HepG2 (cell line): ENCODE measurements at regions of chr2 and their contacts with region 1.

Region 1: DNA sequence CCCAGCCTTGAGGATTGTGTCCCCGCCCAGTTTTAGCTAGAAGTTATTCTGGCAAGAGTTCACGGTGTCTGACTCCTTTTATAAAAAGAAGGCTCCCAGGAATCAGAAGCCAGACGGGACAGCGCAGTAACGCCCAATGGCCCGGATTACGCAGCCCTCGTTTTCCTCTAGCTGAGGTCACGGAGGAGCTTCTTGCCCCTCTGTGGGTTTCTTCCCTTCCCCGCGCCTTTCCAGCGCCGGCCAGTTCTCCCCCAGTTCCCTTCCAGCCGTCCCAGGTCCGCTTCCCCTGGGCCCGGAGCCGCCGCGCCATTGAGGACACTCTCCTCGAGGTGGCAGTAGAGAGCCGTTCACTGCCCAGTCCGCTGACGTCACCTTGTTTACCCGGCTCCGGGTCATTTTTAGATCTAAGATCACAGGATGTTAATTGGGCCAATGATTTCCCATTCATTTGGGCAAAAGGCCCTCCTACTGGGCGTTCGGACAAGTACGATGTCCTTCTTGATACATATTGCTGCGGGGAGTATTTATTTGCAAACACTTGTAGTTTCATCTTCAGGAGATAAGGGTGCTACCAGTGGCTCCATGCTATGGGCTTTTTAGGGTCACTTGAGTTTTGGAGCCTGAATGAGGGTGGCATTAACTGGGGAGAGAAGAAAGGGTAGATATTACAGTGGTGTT is 81.5 kb upstream of the PPM1B start:
- DNase-seq: peak; percentile 72
- ATAC-seq: peak; percentile 91
- H3K4me3 ChIP-seq: peak overlapping the region; percentile 55 to 72 (median 61)
- H3K27ac ChIP-seq: no peak overlapping the region
- H3K4me1 ChIP-seq: peaks cover 44% of the 10 kb centered on the region
- H3K27me3 ChIP-seq: peaks cover 0 to 8% of the 10 kb centered on the region in 2 experiments; a peak in 2 of 5 replicates
- CTCF ChIP-seq: peak; percentile 98
- EP300 ChIP-seq: no peak
- POLR2A ChIP-seq: no peak
- RAD21 ChIP-seq: peak; percentile 94

Region 2: GRCh38 chr2:44205169-44205568 is 118.0 kb after region 1 on chr2:
- CTCF ChIA-PET with region 1: no interaction called
- POLR2A ChIA-PET with region 1: no interaction called
- in situ Hi-C with region 1: no loop called
- intact Hi-C with region 1: no loop called
- DNase-seq: no peak
- ATAC-seq: no peak
- H3K4me3 ChIP-seq: no peak overlapping the region
- H3K27ac ChIP-seq: no peak overlapping the region
- H3K4me1 ChIP-seq: no peaks in the 10 kb centered on the region
- H3K27me3 ChIP-seq: no peaks in the 10 kb centered on the region
- CTCF ChIP-seq: no peak
- EP300 ChIP-seq: no peak
- POLR2A ChIP-seq: no peak
- RAD21 ChIP-seq: no peak

Region 3: GRCh38 chr2:44244129-44244871 is 157.1 kb after region 1 on chr2:
- CTCF ChIA-PET with region 1: interaction called, 3 read pairs
- POLR2A ChIA-PET with region 1: no interaction called
- in situ Hi-C with region 1: no loop called
- intact Hi-C with region 1: loop called (anchors 5 kb)
- DNase-seq: peak; percentile 77
- ATAC-seq: peak; percentile 75
- H3K4me3 ChIP-seq: peak overlapping the region in 2 of 3 experiments; percentile 29 to 45; a peak in 3 of 6 replicates
- H3K27ac ChIP-seq: no peak overlapping the region
- H3K4me1 ChIP-seq: peaks cover 21% of the 10 kb centered on the region
- H3K27me3 ChIP-seq: no peaks in the 10 kb centered on the region
- CTCF ChIP-seq: peak; percentile 57
- EP300 ChIP-seq: no peak
- POLR2A ChIP-seq: no peak
- RAD21 ChIP-seq: 0 out of 2 replicates have a peak, but pooled peaks have one; percentile 25

Region 4: GRCh38 chr2:44291281-44292248 is 204.4 kb after region 1 on chr2:
- CTCF ChIA-PET with region 1: interaction called, 13 read pairs
- POLR2A ChIA-PET with region 1: interaction called, 4 read pairs
- in situ Hi-C with region 1: loop called (anchors 5 kb)
- intact Hi-C with region 1: loop called (anchors 1 kb)
- DNase-seq: peak; percentile 95
- ATAC-seq: peak; percentile 98
- H3K4me3 ChIP-seq: peak overlapping the region in 2 of 3 experiments; percentile 12 to 13; a peak in 1 of 6 replicates
- H3K27ac ChIP-seq: no peak overlapping the region
- H3K4me1 ChIP-seq: peaks cover 64% of the 10 kb centered on the region
- H3K27me3 ChIP-seq: peaks cover 2 to 6% of the 10 kb centered on the region in 2 experiments; a peak in 2 of 5 replicates
- CTCF ChIP-seq: peak; percentile 94
- EP300 ChIP-seq: peak in 1 of 2 experiments; percentile 46; a peak in 1 of 4 replicates
- POLR2A ChIP-seq: no peak
- RAD21 ChIP-seq: peak; percentile 95

Region 5: DNA sequence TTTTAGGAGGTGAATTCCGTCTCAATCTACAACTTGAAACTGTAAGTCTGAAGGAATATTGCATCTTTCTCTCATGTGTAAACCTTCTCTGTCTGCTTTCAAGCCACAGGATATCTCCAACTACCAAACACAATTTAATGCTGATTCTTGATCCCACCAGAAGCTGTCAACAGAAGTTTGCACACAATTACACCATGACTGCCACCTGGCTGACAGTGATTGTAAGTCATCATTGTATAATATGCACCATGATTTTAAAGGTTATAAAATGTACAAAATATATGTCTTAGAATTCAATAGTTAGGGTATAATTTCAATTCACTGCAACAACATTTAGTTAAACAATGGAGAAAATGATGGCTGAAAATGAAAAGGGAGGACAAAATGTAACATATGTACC is 255.7 kb after region 1 on chr2:
- CTCF ChIA-PET with region 1: interaction called, 3 read pairs
- POLR2A ChIA-PET with region 1: no interaction called
- in situ Hi-C with region 1: no loop called
- intact Hi-C with region 1: loop called (anchors 2 kb)
- DNase-seq: peak; percentile 51
- ATAC-seq: peak; percentile 68
- H3K4me3 ChIP-seq: no peak overlapping the region
- H3K27ac ChIP-seq: no peak overlapping the region
- H3K4me1 ChIP-seq: no peaks in the 10 kb centered on the region
- H3K27me3 ChIP-seq: no peaks in the 10 kb centered on the region
- CTCF ChIP-seq: peak; percentile 65
- EP300 ChIP-seq: no peak
- POLR2A ChIP-seq: no peak
- RAD21 ChIP-seq: peak; percentile 49; the same call in 1 of the 2 replicates